Activated naive CD4-positive, alpha-beta T cell treated with anti-CD3 and anti-CD28 coated beads for 36 hours (primary cell): ENCODE measurements at regions of chr1 and their contacts with region 1.

Region 1: GRCh38 chr1:179365320-179366092 is at the start of gene AXDND1:
- DNase-seq: peak; percentile 94
- H3K4me3 Mint-ChIP-seq: peak within 1 kb of the TSS; percentile 93
- H3K27ac Mint-ChIP-seq: peak within 1 kb of the TSS; percentile 100
- H3K4me1 Mint-ChIP-seq: peaks cover 21% of the 10 kb centered on the region
- H3K27me3 Mint-ChIP-seq: no peaks in the 10 kb centered on the region
- total RNA-seq, gene AXDND1: 0.57 to 0.67 TPM

Region 2: GRCh38 chr1:178532392-178532791 is 833.1 kb before region 1 on chr1:
- CTCF ChIA-PET with region 1: no interaction called
- intact Hi-C with region 1: loop called (anchors 2 kb)
- DNase-seq: peak; percentile 84
- H3K4me3 Mint-ChIP-seq: no peak overlapping the region
- H3K27ac Mint-ChIP-seq: no peak overlapping the region
- H3K4me1 Mint-ChIP-seq: no peaks in the 10 kb centered on the region
- H3K27me3 Mint-ChIP-seq: no peaks in the 10 kb centered on the region

Region 3: GRCh38 chr1:178774263-178774662 is 591.2 kb before region 1 on chr1:
- CTCF ChIA-PET with region 1: interaction called, 3 read pairs
- intact Hi-C with region 1: loop called (anchors 1 kb)
- DNase-seq: no peak
- H3K4me3 Mint-ChIP-seq: no peak overlapping the region
- H3K27ac Mint-ChIP-seq: no peak overlapping the region
- H3K4me1 Mint-ChIP-seq: no peaks in the 10 kb centered on the region
- H3K27me3 Mint-ChIP-seq: no peaks in the 10 kb centered on the region

Region 4: DNA sequence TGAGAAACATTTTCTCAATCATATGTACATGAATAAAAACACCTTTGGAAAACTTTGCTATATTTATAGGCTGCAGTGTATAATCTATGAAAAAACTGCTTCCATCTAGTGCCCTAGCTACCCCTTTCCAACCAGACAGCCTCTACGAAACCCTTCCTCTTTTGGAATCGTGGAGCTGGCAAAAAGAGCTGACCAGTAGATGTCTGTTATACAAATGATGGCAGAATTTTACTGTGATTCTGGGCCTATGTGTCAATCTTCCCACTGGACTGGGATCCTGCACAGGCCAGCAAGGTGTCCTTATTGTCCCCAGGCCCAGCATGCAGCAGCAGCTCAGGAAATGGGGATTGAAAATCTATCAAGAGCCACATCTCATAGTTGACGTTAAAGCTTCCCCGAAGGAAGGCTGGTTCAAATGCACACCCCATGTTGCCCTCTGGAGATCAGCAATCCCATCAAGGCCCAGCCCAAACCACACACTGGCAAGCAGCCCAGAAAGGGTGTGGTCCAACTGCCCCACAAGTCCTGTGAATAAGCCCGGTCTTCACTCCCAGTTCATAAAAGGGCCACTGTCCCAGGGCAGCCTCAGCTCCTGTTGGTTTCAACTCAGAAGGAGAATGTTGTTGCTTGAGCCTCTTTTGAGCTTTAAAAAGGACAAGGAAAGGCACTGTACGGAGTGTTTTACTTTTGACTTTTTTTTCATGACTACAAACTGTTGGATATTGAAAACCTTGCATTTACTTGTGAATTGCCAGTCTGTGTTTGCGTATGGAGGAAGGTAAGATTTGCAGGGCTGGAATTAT is 348.6 kb before region 1 on chr1:
- CTCF ChIA-PET with region 1: no interaction called
- intact Hi-C with region 1: no loop called
- DNase-seq: no peak
- H3K4me3 Mint-ChIP-seq: no peak overlapping the region
- H3K27ac Mint-ChIP-seq: no peak overlapping the region
- H3K4me1 Mint-ChIP-seq: no peaks in the 10 kb centered on the region
- H3K27me3 Mint-ChIP-seq: no peaks in the 10 kb centered on the region

Region 5: DNA sequence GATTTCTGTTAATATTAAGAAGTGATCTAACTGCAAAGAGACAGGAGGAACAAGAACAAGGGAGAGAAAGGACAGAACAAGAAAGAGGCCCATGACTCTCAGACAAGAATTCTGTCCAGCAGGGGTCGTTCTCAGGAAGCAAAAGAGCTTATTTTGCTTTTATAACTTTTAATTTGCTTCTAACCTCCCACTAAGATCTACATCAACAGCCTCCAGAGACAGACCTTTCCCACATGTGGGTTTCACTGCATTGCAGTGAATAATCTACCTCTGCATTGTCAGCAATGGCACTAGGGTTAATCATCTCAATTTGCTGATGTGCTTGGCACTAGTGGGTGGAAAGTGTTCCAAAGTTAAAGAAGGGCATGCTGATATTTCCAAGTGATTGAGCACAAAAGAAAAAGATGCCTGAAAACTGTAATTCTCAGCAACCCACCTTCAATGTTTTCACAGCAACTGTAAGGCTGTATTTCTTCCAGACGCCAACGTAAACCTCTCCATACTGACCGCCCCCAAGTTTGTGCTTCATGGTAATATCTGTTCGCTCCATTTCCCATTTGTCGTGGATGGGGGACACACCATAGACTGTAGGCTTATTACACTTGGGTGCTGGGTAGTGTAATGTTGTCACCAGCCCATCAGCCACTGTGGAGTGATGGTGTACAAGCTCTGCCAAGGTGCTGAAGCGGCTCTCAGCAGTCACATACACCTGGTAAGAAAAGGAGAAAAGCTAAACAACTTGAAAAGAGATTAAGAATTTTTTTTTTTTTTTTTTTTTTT is 244.2 kb before region 1 on chr1:
- CTCF ChIA-PET with region 1: interaction called, 33 read pairs
- intact Hi-C with region 1: loop called (anchors 1 kb)
- DNase-seq: peak; percentile 64
- H3K4me3 Mint-ChIP-seq: no peak overlapping the region
- H3K27ac Mint-ChIP-seq: no peak overlapping the region
- H3K4me1 Mint-ChIP-seq: peaks cover 3% of the 10 kb centered on the region
- H3K27me3 Mint-ChIP-seq: no peaks in the 10 kb centered on the region

Region 6: DNA sequence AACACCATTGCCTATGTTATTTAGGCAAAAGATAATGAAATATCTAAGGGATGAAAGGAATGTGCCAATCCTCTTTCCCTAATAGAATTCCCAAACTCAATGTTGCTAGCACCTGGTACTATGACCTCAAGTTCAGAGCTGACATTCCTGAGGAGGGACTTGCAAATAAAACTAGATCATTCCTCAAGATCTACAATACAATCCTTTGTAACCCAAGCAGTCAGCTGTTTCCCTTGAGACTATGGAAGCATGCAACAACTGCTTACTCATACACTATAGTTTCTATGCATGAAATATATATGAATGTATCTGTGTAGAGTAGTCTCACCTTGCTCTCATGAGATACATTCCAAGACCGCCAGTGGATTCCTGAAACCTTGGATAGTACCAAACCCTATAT is 201.0 kb before region 1 on chr1:
- CTCF ChIA-PET with region 1: no interaction called
- intact Hi-C with region 1: no loop called
- DNase-seq: no peak
- H3K4me3 Mint-ChIP-seq: no peak overlapping the region
- H3K27ac Mint-ChIP-seq: no peak overlapping the region
- H3K4me1 Mint-ChIP-seq: peaks cover 3% of the 10 kb centered on the region
- H3K27me3 Mint-ChIP-seq: no peaks in the 10 kb centered on the region

Region 7: GRCh38 chr1:179229214-179230140 is 136.0 kb before region 1 on chr1 and contains the start of gene ABL2:
- CTCF ChIA-PET with region 1: no interaction called
- intact Hi-C with region 1: loop called (anchors 1 kb)
- DNase-seq: peak; percentile 49
- H3K4me3 Mint-ChIP-seq: peak within 1 kb of the TSS; percentile 90
- H3K27ac Mint-ChIP-seq: peak within 1 kb of the TSS; percentile 85
- H3K4me1 Mint-ChIP-seq: peaks cover 31% of the 10 kb centered on the region
- H3K27me3 Mint-ChIP-seq: no peaks in the 10 kb centered on the region
- total RNA-seq, gene ABL2: 8.1 TPM

Region 8: GRCh38 chr1:179803104-179803503 is 437.6 kb after region 1 on chr1:
- CTCF ChIA-PET with region 1: no interaction called
- intact Hi-C with region 1: no loop called
- DNase-seq: no peak
- H3K4me3 Mint-ChIP-seq: no peak overlapping the region
- H3K27ac Mint-ChIP-seq: no peak overlapping the region
- H3K4me1 Mint-ChIP-seq: no peaks in the 10 kb centered on the region
- H3K27me3 Mint-ChIP-seq: no peaks in the 10 kb centered on the region

Region 9: DNA sequence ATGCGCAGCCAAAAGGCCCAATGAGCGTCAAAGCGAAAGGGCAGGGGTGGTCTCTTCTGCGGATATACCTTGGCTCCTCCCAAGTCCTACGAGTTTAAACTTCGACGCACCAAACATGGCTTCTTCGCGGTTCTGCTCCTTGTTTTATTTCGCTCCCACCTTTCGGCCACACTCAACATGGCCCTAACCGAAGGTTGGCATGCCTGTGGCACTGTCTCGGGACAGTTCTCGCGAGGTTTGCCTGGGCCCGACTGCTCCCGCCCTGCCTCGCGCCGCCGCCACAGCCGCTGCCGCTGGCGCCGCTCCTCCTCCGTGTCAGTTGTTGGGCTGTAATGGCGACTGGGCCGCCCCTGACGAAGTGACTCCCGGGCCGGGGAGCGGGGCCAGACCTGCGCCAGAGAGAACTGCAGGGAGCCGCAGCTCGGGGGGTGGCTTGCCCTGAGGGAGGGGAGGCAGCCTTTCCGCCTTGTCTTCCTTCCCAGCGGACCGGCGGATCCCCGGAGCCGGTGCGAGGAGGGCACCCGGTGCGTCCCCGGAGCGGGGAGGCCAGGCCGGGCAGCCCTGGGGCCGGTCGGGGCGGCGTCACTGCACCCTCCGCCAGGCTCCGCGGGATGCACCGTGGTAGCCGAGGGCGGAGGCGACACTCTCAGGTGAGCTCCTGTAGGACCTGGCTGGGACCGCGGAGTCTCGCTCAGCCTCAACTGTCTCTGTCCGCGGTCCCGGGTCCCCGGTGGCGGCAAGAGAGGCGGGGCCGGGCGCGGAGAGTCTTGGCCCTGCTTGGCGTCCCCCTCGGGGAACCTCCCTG is 589.2 kb after region 1 on chr1 and contains the start of gene CEP350:
- CTCF ChIA-PET with region 1: no interaction called
- intact Hi-C with region 1: loop called (anchors 5 kb)
- DNase-seq: peak; percentile 99
- H3K4me3 Mint-ChIP-seq: peak within 1 kb of the TSS; percentile 85
- H3K27ac Mint-ChIP-seq: peak within 1 kb of the TSS; percentile 95
- H3K4me1 Mint-ChIP-seq: peaks cover 41% of the 10 kb centered on the region
- H3K27me3 Mint-ChIP-seq: no peaks in the 10 kb centered on the region
- total RNA-seq, gene CEP350: 30.3 to 36.0 TPM

Region 10: GRCh38 chr1:179973198-179974110 is 607.9 kb after region 1 on chr1:
- CTCF ChIA-PET with region 1: no interaction called
- intact Hi-C with region 1: no loop called
- DNase-seq: no peak
- H3K4me3 Mint-ChIP-seq: no peak overlapping the region
- H3K27ac Mint-ChIP-seq: no peak overlapping the region
- H3K4me1 Mint-ChIP-seq: peaks cover 58% of the 10 kb centered on the region
- H3K27me3 Mint-ChIP-seq: no peaks in the 10 kb centered on the region